GM13977 (cell line): ENCODE measurements at regions of chr2 and their contacts with region 1.

Region 1: DNA sequence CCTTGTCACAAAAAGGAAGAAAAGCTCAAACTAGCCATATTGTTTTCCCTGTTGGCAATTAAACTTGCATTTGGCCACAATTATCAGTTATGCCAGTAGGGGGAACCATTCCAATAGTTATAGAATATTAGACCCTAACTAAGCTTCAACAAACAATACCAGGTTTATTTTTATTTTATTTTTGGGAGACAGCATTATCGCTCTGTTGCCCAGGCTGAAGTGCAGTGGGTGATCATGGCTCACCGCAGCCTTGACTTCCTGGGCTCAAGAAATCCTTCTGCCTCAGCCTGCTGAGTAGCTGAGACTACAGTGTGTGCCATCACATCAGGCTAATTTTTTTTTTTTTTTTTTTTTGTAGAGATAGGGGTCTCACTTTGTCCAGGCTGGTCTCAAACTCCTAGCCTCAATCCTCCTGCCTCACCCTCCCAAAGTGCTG is 102.1 kb downstream of the ATAD2B start:
- DNase-seq: peak; percentile 32
- CTCF ChIP-seq: peak; percentile 61

Region 2: GRCh38 chr2:23545396-23545795 is 279.4 kb before region 1 on chr2:
- in situ Hi-C with region 1: no loop called
- DNase-seq: no peak
- CTCF ChIP-seq: no peak

Region 3: DNA sequence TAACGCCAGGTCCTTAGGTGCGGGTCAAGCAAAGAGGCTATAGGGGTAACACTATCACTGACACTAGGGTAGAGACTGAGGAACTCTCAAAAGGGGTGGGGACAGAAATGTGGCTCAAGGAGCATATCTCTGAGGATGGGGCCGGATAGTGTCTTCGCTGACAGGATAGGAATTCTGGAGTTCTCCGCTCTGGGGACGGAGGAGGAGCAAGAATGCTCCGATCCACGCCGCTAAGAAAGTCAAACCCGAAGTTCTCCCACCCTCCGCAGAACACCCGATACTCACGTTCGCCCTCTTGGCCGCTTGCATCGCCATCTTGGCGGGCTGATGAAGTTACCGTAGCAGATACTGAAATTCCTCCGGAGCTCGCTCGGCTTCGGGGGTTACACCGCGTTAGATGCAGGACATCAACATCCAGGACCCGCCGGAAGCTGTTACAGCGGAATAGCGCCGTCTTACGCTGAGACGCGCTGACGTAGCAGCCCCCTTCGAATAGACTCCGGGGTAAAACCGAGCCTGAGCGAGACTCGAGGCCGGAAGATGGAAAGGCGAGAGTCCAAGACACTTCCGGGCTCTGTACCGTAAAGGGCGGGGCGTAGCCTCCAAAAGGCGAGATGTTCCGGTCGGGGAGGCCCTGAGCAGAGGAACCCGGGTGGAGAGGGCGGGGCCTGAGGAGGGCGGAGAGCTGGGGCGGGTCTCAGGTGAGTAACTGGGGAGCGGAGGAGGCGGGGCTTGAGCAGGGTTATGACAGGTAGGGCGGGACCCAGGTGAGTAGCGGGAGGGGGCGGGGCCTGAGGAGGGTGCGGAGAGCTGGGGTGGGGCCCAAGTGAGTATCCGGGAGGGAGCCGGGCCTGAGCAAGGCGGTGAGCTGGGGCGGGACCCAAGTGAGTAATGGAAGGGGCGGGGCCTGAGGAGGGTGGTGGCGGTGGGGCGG is 251.4 kb after region 1 on chr2 and contains the start of gene SF3B6:
- in situ Hi-C with region 1: loop called (anchors 10 kb)
- DNase-seq: peak; percentile 95
- CTCF ChIP-seq: no peak